Naive thymus-derived CD4-positive, alpha-beta T cell (primary cell): ENCODE measurements at regions of chr2 and their contacts with region 1.

Region 1: DNA sequence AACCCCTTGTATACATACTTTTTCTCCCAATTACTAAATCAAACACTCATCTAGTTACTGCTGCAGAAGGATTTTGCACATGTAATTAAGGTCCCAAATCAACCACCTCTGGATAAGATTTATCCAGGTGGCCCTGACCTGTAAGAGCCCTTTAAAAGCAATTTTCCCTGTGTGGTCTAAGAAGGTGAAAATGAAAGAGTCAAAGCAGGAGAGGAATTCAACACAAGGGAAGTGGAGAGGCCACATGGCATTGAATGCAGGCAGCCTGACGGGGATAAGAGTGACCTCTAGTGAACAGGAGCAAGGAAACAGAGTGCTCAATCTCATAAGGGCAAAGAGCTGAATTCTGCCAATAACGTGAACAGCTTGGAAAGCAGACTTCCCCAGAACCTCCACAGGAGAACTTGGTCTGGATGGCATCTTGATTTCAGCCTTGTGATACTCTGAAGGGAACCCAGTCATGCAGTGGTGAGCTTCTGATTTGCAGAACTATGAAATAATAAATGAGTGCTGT is 27.2 kb downstream of the PPP3R1 start:
- DNase-seq: peak in 3 of 9 donors; percentile 14 to 27 (median 23)
- ATAC-seq: peak; percentile 86
- H3K4me3 ChIP-seq: no peak overlapping the region
- H3K4me3 Mint-ChIP-seq: peak overlapping the region in 9 of 10 donors; percentile 4 to 66 (median 52)
- H3K27ac ChIP-seq: no peak overlapping the region
- H3K27ac Mint-ChIP-seq: peak overlapping the region in 8 of 9 donors; percentile 5 to 61 (median 24)
- H3K4me1 ChIP-seq: peaks cover 20 to 41% of the 10 kb centered on the region in 2 donors
- H3K4me1 Mint-ChIP-seq: peaks cover 71 to 100% (median 98%) of the 10 kb centered on the region in 7 donors
- H3K27me3 ChIP-seq: no peaks in the 10 kb centered on the region
- H3K27me3 Mint-ChIP-seq: no peaks in the 10 kb centered on the region

Region 2: GRCh38 chr2:66408905-66409304 is 1816.3 kb before region 1 on chr2:
- CTCF ChIA-PET with region 1: no interaction called
- POLR2A ChIA-PET with region 1: no interaction called
- intact Hi-C with region 1: no loop called
- DNase-seq: no peak
- ATAC-seq: no peak
- H3K4me3 ChIP-seq: no peak overlapping the region
- H3K4me3 Mint-ChIP-seq: no peak overlapping the region
- H3K27ac ChIP-seq: no peak overlapping the region
- H3K27ac Mint-ChIP-seq: no peak overlapping the region
- H3K4me1 ChIP-seq: no peaks in the 10 kb centered on the region
- H3K4me1 Mint-ChIP-seq: no peaks in the 10 kb centered on the region
- H3K27me3 ChIP-seq: no peaks in the 10 kb centered on the region
- H3K27me3 Mint-ChIP-seq: peaks cover 0 to 16% (median 4%) of the 10 kb centered on the region in 5 donors

Region 3: GRCh38 chr2:67974559-67975430 is 250.4 kb before region 1 on chr2:
- CTCF ChIA-PET with region 1: no interaction called
- POLR2A ChIA-PET with region 1: no interaction called
- intact Hi-C with region 1: no loop called
- DNase-seq: no peak
- ATAC-seq: peak; percentile 32
- H3K4me3 ChIP-seq: no peak overlapping the region
- H3K4me3 Mint-ChIP-seq: no peak overlapping the region
- H3K27ac ChIP-seq: no peak overlapping the region
- H3K27ac Mint-ChIP-seq: no peak overlapping the region
- H3K4me1 ChIP-seq: no peaks in the 10 kb centered on the region
- H3K4me1 Mint-ChIP-seq: peaks cover 0 to 4% (median 0%) of the 10 kb centered on the region in 7 donors
- H3K27me3 ChIP-seq: no peaks in the 10 kb centered on the region
- H3K27me3 Mint-ChIP-seq: peaks cover 7 to 25% (median 17%) of the 10 kb centered on the region in 5 donors

Region 4: DNA sequence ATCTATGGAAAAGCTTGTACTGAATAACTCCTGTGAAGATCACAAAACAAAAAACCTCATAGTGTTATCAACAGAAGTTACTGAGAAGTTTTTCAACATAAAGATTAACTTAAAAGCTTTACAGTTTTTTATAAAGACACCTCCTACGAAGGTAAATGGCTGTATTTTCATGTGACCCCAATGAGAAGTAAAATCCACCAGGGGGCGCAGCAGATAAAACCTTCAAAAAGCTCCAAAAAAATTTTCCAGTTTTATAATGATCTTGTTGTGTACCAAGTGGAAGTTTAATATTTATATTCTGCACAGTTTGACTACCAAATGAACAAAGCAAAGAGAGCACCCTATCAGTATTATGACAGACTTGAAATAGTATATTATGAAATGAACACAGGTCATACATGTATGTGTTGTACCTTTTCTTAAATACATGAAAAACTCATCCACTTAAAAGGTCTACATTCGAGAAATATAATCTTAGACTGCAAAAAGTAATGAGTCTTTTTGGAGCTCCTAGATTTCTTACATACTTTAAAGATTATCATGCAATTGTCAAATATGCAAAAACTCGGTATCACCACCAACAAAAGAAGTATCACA is 29.0 kb before region 1 on chr2:
- CTCF ChIA-PET with region 1: interaction called, 4 read pairs
- POLR2A ChIA-PET with region 1: interaction called, 3 read pairs
- intact Hi-C with region 1: loop called in 1 of 2 experiments (anchors 1 kb)
- DNase-seq: peak in 6 of 9 donors; percentile 21 to 65 (median 57)
- ATAC-seq: peak; percentile 74
- H3K4me3 ChIP-seq: no peak overlapping the region
- H3K4me3 Mint-ChIP-seq: no peak overlapping the region
- H3K27ac ChIP-seq: no peak overlapping the region
- H3K27ac Mint-ChIP-seq: peak overlapping the region in 5 of 9 donors; percentile 6 to 81 (median 72)
- H3K4me1 ChIP-seq: no peaks in the 10 kb centered on the region
- H3K4me1 Mint-ChIP-seq: peaks cover 35 to 92% (median 71%) of the 10 kb centered on the region in 7 donors
- H3K27me3 ChIP-seq: no peaks in the 10 kb centered on the region
- H3K27me3 Mint-ChIP-seq: no peaks in the 10 kb centered on the region

Region 5: DNA sequence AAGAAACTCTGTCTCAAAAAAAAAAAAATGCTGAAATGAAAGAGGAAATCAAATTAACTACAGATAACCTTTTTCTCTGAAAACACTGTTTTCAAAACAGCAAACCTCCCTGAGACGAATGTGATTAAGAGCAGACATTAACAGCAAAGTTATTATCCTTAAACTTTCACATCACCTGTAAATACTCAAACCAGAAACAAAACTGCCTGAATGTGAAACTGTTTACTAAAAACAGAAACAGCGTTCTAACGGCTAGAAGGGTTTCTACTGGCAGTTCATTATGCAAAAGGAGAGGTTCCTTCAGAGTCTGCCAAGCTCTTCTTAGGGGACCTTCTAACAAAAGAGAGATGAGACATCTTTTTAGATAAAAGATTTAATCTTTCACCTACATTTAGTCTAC is 21.6 kb before region 1 on chr2:
- CTCF ChIA-PET with region 1: interaction called, 3 read pairs
- POLR2A ChIA-PET with region 1: interaction called, 3 read pairs
- intact Hi-C with region 1: loop called in 1 of 2 experiments (anchors 2 kb)
- DNase-seq: peak in 3 of 9 donors; percentile 8 to 19 (median 16)
- ATAC-seq: peak; percentile 60
- H3K4me3 ChIP-seq: no peak overlapping the region
- H3K4me3 Mint-ChIP-seq: peak overlapping the region in 9 of 10 donors; percentile 56 to 83 (median 72)
- H3K27ac ChIP-seq: peak overlapping the region; percentile 38
- H3K27ac Mint-ChIP-seq: peak overlapping the region; percentile 53 to 90 (median 83)
- H3K4me1 ChIP-seq: peaks cover 28 to 35% of the 10 kb centered on the region in 2 donors
- H3K4me1 Mint-ChIP-seq: peaks cover 53 to 94% (median 81%) of the 10 kb centered on the region in 7 donors
- H3K27me3 ChIP-seq: no peaks in the 10 kb centered on the region
- H3K27me3 Mint-ChIP-seq: no peaks in the 10 kb centered on the region

Region 6: GRCh38 chr2:68214381-68214780 is 10.8 kb before region 1 on chr2:
- CTCF ChIA-PET with region 1: no interaction called
- POLR2A ChIA-PET with region 1: no interaction called
- intact Hi-C with region 1: loop called in 1 of 2 experiments (anchors 2 kb)
- DNase-seq: no peak
- ATAC-seq: no peak
- H3K4me3 ChIP-seq: no peak overlapping the region
- H3K4me3 Mint-ChIP-seq: no peak overlapping the region
- H3K27ac ChIP-seq: no peak overlapping the region
- H3K27ac Mint-ChIP-seq: peak overlapping the region in 8 of 9 donors; percentile 8 to 71 (median 40)
- H3K4me1 ChIP-seq: peaks cover 5 to 18% of the 10 kb centered on the region in 2 donors
- H3K4me1 Mint-ChIP-seq: peaks cover 41 to 86% (median 80%) of the 10 kb centered on the region in 7 donors
- H3K27me3 ChIP-seq: no peaks in the 10 kb centered on the region
- H3K27me3 Mint-ChIP-seq: no peaks in the 10 kb centered on the region

Region 7: GRCh38 chr2:68238955-68239822 is 14.0 kb after region 1 on chr2:
- CTCF ChIA-PET with region 1: interaction called, 3 read pairs
- POLR2A ChIA-PET with region 1: no interaction called
- intact Hi-C with region 1: loop called in 1 of 2 experiments (anchors 1 kb)
- DNase-seq: no peak
- ATAC-seq: peak; percentile 64
- H3K4me3 ChIP-seq: no peak overlapping the region
- H3K4me3 Mint-ChIP-seq: peak overlapping the region in 9 of 10 donors; percentile 2 to 76 (median 50)
- H3K27ac ChIP-seq: peak overlapping the region; percentile 15
- H3K27ac Mint-ChIP-seq: peak overlapping the region in 8 of 9 donors; percentile 5 to 94 (median 46)
- H3K4me1 ChIP-seq: peaks cover 65 to 67% of the 10 kb centered on the region in 2 donors
- H3K4me1 Mint-ChIP-seq: peaks cover 24 to 86% (median 61%) of the 10 kb centered on the region in 7 donors
- H3K27me3 ChIP-seq: no peaks in the 10 kb centered on the region
- H3K27me3 Mint-ChIP-seq: no peaks in the 10 kb centered on the region